Mammary epithelial cell (primary cell): ENCODE measurements at regions of chr7 and their contacts with region 1.

Region 1: DNA sequence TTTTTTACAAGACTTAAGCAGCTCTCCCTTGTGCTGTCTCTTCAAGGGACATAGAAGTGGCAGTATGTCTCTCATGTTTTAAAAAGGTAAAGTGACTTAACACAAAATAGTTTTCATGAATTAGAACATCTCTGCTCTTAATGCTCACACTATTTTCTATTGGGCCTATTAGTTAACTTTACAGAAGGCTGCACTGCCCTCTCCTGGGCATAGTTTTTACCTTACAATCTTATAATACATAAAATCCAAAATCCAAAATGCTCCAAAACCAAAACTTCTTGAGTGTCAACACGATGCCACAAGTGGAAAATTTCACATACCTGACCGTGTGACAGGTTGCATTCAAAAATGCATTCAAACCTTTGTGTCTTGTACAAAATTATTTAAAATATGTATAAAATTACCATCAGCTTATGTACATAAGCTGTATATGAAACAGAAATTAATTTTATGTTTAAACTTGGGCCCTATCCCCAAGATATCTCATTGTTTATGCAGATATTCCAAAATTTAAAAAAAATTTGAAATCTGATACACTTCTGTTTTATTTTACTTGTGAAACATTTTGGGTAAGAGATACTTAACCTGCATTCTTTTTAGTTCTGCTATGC is 25.8 kb downstream of the TES start:
- DNase-seq: no peak
- H3K4me3 ChIP-seq: no peak overlapping the region
- H3K27ac ChIP-seq: peak overlapping the region; percentile 7
- H3K4me1 ChIP-seq: peaks cover 28% of the 10 kb centered on the region
- H3K27me3 ChIP-seq: no peaks in the 10 kb centered on the region
- CTCF ChIP-seq: peak; percentile 45 to 49

Region 2: DNA sequence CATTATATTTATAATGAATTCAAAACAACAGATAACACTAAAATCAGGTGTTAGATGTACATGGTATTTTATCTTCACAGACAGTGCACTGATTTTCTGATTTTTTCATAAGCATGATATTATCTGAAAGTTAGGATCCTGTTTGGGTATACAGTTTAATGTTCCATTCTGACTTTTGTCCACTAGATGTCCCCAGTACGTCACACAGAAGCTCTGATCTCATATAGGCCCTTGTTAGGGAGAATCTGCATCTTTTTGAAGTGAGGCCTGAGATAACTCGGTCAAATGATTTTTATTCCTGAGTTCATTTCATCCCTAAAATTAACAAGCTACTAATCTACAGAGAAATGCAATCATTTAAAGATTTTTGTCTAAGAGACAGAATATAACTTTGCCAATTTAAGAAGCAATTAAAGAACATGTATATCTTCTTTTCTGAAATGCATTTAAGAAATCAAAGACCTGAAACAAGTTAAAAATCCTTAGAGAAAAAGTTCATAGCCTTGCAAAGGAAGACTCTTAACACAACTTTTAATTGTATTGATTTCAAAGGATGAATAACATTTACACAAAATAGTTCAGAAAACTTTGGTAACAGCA is 97.8 kb before region 1 on chr7:
- CTCF ChIA-PET with region 1: interaction called, 4 read pairs
- dilution Hi-C with region 1: no loop called
- in situ Hi-C with region 1: no loop called
- intact Hi-C with region 1: loop called (anchors 1 kb)
- DNase-seq: peak; percentile 69
- H3K4me3 ChIP-seq: no peak overlapping the region
- H3K27ac ChIP-seq: peak overlapping the region; percentile 61
- H3K4me1 ChIP-seq: peaks cover 21% of the 10 kb centered on the region
- H3K27me3 ChIP-seq: no peaks in the 10 kb centered on the region
- CTCF ChIP-seq: peak; percentile 82 to 85

Region 3: DNA sequence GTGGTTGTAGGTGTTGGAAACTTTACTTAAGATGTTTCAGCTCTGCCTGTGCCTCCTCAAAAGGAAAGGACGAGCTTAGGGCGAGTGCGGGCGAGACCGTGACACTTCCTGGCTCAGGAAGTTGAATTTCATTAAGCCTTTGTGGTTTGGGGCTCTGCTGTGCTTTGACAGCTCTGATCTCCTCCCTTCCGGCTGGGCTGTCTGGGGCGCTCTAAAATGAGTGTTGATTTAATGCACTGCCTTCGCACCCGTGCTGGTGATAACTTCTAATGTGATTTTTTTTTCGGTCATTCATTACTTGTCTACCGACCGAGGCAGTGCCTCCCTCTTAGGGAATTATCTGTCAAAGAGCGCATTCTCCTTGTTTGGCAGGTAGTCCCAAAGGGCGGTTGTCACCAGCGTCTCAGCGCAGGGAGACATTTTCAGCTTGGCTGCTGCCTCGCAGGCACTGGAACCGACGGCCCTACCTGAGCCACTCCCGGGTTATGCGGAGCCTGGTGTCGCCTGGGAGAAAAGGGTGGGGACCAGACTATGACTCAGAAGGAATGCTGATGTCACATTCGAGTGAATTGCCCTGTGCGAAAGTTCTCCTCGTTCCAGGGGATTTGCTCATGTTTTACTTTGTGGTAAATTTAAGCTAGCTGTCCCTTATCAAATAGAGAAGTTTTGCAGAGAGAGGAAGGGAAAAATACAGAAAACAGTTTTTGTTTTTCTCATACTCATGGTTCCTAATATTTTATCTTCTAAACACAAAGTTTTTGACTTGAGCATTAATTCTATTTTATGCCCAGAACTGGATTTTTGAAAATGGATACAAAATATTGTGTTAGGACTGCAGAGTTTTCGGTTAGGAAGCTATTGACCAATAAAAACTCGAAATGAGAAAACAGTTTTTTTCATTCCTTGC is 24.9 kb before region 1 on chr7:
- CTCF ChIA-PET with region 1: no interaction called
- dilution Hi-C with region 1: no loop called
- in situ Hi-C with region 1: no loop called
- intact Hi-C with region 1: loop called (anchors 1 kb)
- DNase-seq: peak; percentile 91
- H3K4me3 ChIP-seq: peak overlapping the region; percentile 85 to 98 (median 91)
- H3K27ac ChIP-seq: peak overlapping the region; percentile 99
- H3K4me1 ChIP-seq: peaks cover 36% of the 10 kb centered on the region
- H3K27me3 ChIP-seq: no peaks in the 10 kb centered on the region
- CTCF ChIP-seq: no peak